GM10248 (cell line): ENCODE measurements at regions of chr7 and their contacts with region 1.

Region 1: GRCh38 chr7:106461993-106462859 is 177.4 kb upstream of the NAMPT start:
- DNase-seq: peak; percentile 27
- CTCF ChIP-seq: peak; percentile 52

Region 2: GRCh38 chr7:106476751-106477150 is 14.5 kb after region 1 on chr7:
- CTCF ChIA-PET with region 1: interaction called, 11 read pairs
- POLR2A ChIA-PET with region 1: no interaction called
- DNase-seq: no peak
- CTCF ChIP-seq: no peak